ENCODE measurements at regions of chr19 and their contacts with region 1.

Region 1: DNA sequence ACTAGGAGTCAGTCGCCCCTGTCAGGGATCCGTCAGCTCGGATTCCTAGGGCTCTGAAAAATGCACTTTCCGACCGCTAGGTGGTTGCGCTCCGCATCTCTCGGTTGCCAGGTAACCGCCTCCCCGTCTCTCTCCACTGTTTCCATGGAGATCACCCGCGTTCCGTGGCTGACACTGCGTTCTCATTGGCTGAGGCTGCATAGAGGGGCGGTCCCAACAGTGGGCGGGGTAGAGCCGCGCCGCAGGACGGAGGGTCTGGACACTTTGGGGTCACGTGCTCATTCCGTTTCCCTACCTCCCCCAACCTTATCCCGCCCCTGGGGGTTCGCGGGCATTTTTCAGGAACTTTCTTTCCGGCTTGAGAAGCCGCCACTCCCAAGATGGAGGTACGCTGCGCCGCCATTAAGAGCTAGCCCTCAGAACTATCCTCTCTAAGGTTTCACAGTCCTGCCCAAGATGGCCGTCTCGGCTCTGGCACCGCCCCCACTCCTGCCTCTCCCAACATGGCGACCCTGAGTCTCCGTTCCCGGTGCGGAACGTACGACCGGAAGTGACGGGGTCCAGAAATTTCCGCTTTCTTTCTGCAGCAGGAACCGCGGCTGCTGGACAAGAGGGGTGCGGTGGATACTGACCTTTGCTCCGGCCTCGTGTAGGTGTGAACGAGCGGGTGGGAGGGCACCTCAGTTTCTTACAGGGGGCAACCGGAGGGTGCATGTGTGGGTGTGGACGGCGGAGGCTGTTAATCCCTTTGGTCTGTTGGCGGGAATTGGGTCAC is at the starts of genes ODAD3 and PRKCSH:
- DNase-seq: peak; percentile 95
- ATAC-seq: peak; percentile 88
- H3K4me3 Mint-ChIP-seq: peak within 1 kb of the TSS; percentile 100
- H3K27ac Mint-ChIP-seq: peak within 1 kb of the TSS; percentile 95
- H3K4me1 Mint-ChIP-seq: peaks cover 41% of the 10 kb centered on the region
- H3K27me3 Mint-ChIP-seq: no peaks in the 10 kb centered on the region
- CTCF ChIP-seq: peak; percentile 85
- total RNA-seq, gene ODAD3: 0.29 TPM in 1 of 2 replicates, not detected in the other
- total RNA-seq, gene PRKCSH: 287 and 289 TPM in 2 replicates

Region 2: DNA sequence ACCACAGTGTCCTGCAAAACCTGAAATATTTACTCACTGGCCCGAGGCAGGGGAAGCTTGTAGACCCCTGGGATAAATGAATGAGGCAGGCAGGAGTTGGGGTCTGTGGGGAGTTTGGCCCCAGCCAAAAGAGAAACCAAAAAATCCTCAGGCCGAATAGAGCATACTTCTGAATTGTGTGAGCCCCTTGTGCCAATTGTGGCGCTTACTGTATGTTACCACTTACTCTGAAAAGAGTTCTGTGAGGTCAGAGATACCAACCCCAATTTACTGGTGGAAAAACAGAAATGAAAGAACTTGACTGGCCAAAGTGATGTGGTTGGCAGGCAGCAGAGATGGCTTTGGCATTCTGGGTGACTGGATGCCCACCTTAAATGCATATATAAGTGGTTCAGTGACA is 557.0 kb before region 1 on chr19:
- CTCF ChIA-PET with region 1: no interaction called
- POLR2A ChIA-PET with region 1: no interaction called
- intact Hi-C with region 1: loop called (anchors 2 kb)
- DNase-seq: no peak
- ATAC-seq: peak; percentile 13
- H3K4me3 Mint-ChIP-seq: peak overlapping the region; percentile 55
- H3K27ac Mint-ChIP-seq: peak overlapping the region; percentile 84
- H3K4me1 Mint-ChIP-seq: peaks cover 39% of the 10 kb centered on the region
- H3K27me3 Mint-ChIP-seq: no peaks in the 10 kb centered on the region
- CTCF ChIP-seq: no peak

Region 3: GRCh38 chr19:11242864-11243797 is 192.1 kb before region 1 on chr19:
- CTCF ChIA-PET with region 1: no interaction called
- POLR2A ChIA-PET with region 1: no interaction called
- intact Hi-C with region 1: no loop called
- DNase-seq: peak; percentile 84
- ATAC-seq: peak; percentile 100
- H3K4me3 Mint-ChIP-seq: peak overlapping the region; percentile 15
- H3K27ac Mint-ChIP-seq: no peak overlapping the region
- H3K4me1 Mint-ChIP-seq: peaks cover 6% of the 10 kb centered on the region
- H3K27me3 Mint-ChIP-seq: peaks cover 2% of the 10 kb centered on the region
- CTCF ChIP-seq: peak; percentile 48

Region 4: DNA sequence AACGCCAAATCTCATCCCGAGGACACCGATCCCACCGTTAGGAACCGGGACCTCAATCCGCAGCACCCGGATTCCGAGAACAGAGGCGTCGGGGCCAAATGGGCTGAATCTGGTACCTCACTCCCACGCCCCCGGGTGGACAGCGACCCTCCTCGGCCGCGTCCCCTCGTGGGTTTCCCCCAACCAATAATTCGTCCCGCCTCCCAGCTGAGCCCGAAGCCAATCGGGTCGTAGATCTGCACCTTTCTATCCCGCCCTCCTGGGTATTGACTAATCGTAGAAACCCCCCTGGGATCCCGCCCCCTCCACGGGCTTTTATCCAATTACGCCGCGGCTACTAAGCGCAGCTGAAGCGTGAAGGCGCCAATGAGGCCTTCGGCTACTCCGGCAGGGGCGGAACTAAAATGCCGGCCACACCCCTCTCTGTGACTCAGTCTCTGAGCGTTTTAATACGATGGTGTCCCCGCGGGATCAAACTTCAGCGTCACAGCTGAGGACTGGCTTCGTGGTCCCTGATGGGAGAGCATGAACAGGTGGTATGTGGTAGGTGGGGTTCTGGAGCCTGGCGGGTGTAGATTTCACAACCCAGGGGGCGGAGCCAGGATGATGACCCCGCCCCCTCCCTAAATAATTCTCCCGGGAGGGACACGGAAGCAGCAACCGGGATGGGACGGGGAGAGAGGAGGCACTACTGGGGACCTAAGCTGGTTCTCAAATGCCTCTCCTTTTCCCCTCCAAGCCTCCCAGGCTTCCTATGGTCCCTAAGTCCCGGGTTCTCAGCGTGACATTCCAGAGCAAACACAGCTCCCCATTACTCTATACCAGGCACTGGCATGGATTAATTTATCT is 88.9 kb before region 1 on chr19 and contains the starts of genes CCDC159 and TMEM205:
- CTCF ChIA-PET with region 1: interaction called, 3 read pairs
- POLR2A ChIA-PET with region 1: interaction called, 3 read pairs
- intact Hi-C with region 1: loop called (anchors 1 kb)
- DNase-seq: peak; percentile 93
- ATAC-seq: peak; percentile 95
- H3K4me3 Mint-ChIP-seq: peak within 1 kb of the TSS; percentile 98
- H3K27ac Mint-ChIP-seq: peak within 1 kb of the TSS; percentile 93
- H3K4me1 Mint-ChIP-seq: peaks cover 30% of the 10 kb centered on the region
- H3K27me3 Mint-ChIP-seq: no peaks in the 10 kb centered on the region
- CTCF ChIP-seq: no peak
- total RNA-seq, gene CCDC159: 27.6 and 32.1 TPM in 2 replicates
- total RNA-seq, gene TMEM205: 61.8 and 68.1 TPM in 2 replicates

Region 5: DNA sequence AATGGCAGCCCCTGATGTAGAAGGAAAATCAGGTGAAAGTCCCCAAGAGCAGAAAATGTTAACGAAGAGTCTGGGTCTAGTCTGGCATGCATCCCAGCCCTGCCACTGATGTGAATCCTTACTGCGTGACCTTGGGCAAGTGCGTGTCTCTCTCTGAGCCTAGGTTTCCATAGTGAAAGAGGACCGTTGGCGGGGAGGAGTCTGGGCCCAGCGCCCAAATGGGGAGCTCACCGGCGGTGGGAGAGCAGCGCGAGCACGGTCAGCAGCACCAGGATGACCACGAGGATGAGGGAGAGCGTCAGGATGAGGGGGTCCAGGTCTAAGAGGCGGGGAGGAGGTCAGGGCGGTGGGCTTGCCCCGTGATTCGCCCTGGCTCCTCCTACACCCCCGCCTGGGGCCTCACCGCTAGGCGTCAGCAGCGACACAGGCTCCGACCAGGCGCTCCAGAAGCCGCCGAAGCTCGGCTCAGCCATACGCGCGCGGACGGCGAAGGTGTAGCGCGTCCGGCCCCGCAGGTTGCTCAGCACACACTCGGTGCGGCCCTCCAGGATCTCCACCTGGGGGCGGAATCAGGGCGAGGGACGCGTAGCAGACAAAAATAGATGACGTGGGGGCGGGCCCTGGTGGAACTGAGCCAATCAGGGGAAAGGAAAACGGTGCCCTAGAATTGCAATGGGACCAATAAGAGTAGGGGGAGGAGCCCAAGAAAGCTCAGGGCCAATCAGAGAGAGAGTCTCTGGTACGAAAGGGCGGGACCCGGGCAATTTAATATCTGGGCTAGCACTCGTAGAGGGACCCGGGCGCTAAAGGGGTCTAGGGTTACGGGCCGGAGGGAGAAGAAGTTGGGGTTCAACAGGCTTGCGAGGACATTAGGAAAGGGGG is 54.4 kb before region 1 on chr19:
- CTCF ChIA-PET with region 1: interaction called, 9 read pairs
- POLR2A ChIA-PET with region 1: interaction called, 35 read pairs
- intact Hi-C with region 1: loop called (anchors 1 kb)
- DNase-seq: peak; percentile 91
- ATAC-seq: peak; percentile 85
- H3K4me3 Mint-ChIP-seq: peak overlapping the region; percentile 92
- H3K27ac Mint-ChIP-seq: peak overlapping the region; percentile 100
- H3K4me1 Mint-ChIP-seq: peaks cover 48% of the 10 kb centered on the region
- H3K27me3 Mint-ChIP-seq: no peaks in the 10 kb centered on the region
- CTCF ChIP-seq: no peak

Region 6: DNA sequence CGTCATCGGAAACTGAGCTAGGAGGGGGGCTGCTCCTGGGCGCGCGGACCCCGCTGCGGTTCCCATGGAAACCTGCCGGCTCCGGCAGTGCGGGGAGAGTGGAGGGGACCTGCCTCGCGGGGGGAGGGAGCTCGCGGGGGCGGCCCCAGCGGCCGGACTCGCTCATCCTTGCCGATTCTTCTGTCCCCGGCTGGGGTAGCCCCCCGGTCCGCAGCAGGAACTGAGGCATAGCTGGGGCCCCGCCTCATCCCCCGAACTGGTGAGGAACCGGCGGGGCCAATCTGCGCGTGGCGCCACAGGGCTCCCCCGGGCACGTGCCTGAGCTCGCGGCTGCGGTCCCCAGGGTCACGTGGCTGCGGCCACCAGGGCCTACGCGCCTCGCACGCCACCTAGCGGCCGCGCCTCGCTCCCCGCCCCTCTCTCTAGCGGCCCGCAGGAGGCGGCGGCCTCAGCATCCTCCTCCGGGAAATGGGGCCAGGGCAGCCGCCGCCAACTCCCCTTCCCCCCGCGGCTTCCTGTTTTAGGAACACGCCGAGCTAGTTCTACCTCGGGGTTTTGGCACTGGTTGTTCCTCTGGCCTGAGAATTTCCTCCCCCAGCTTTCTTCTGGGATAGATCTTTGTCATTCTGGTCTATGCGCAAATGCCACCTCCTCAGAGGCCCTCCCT is 47.3 kb after region 1 on chr19:
- CTCF ChIA-PET with region 1: no interaction called
- POLR2A ChIA-PET with region 1: interaction called, 4 read pairs
- intact Hi-C with region 1: loop called (anchors 1 kb)
- DNase-seq: peak; percentile 85
- ATAC-seq: peak; percentile 72
- H3K4me3 Mint-ChIP-seq: peak overlapping the region; percentile 74
- H3K27ac Mint-ChIP-seq: peak overlapping the region; percentile 41
- H3K4me1 Mint-ChIP-seq: peaks cover 30% of the 10 kb centered on the region
- H3K27me3 Mint-ChIP-seq: peaks cover 23% of the 10 kb centered on the region
- CTCF ChIP-seq: no peak

Region 7: DNA sequence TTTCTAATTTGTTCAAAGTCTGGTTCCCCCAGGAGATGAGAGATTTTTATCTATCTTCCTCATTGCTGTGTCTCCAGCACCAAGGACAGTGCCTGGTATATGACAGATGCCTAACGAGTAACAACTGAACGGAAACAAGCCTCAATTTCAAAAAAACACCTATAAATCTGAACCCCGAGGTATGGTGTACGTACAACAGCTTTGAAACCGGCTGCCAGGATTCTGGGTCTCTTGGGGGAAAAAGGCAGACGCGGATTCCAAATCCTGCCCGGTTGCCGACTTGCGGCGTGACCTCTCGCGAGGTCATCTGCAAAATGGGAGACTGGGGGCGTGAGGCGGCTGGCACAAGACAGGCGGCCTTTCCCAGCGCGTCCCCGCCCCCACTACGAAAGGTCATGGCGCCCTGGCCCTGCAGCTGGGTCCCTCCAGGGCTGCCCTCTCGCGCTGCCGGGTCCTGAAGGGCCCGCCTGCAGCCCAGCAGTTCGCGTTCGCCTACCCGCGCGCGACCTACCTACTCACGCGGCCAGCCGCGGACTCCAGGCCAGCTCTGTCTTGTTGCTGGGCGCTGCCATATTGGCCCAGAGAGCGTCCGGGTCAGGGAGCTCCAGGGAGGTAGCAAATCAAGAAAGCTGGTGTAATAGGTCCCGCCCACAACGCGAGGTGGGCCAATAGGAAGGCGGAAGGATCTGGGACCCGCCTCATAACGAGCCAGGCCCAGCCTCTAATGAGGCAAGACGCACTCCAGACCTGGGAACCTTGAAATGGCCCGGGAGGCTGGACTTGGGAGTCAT is 93.5 kb after region 1 on chr19 and contains the start of gene ECSIT:
- CTCF ChIA-PET with region 1: no interaction called
- POLR2A ChIA-PET with region 1: no interaction called
- intact Hi-C with region 1: loop called (anchors 1 kb)
- DNase-seq: peak; percentile 81
- ATAC-seq: peak; percentile 99
- H3K4me3 Mint-ChIP-seq: peak within 1 kb of the TSS; percentile 93
- H3K27ac Mint-ChIP-seq: peak within 1 kb of the TSS; percentile 89
- H3K4me1 Mint-ChIP-seq: peaks cover 13% of the 10 kb centered on the region
- H3K27me3 Mint-ChIP-seq: no peaks in the 10 kb centered on the region
- CTCF ChIP-seq: no peak
- total RNA-seq, gene ECSIT: 49.3 and 54.2 TPM in 2 replicates

Region 8: DNA sequence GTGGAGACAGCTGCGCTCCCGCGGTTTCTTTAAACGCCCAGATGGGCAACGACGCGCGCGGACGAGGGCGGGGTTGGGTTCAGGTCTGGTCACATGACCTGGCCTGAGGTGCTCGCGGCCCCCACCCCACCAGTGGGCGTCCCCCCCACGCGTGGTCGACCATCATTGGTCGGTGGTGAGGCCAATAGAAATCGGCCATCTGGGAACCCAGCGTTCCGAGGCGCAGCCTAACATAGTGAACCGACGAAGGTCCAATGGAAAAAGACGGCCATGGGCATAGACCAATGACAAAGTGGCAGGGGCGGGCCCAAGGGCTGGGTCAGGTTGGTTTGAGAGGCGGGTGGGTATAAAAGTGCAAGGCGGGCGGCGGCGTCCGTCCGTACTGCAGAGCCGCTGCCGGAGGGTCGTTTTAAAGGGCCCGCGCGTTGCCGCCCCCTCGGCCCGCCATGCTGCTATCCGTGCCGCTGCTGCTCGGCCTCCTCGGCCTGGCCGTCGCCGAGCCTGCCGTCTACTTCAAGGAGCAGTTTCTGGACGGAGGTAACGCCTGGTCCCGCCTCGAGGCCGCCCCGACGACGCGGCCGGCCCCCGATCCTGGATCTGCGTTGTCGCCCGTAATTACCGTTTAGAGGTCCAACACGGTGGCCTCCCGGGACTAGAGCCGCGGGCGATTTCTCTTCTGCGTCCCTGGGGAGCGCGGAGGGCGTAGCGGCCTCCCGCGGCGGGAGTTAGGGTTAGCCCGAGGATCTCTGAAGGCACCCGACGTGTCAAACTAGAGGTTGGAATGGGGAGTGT is 1503.2 kb after region 1 on chr19 and contains the start of gene CALR:
- CTCF ChIA-PET with region 1: no interaction called
- POLR2A ChIA-PET with region 1: no interaction called
- intact Hi-C with region 1: no loop called
- DNase-seq: peak; percentile 96
- ATAC-seq: peak; percentile 85
- H3K4me3 Mint-ChIP-seq: peak within 1 kb of the TSS; percentile 99
- H3K27ac Mint-ChIP-seq: peak within 1 kb of the TSS; percentile 95
- H3K4me1 Mint-ChIP-seq: peaks cover 62% of the 10 kb centered on the region
- H3K27me3 Mint-ChIP-seq: no peaks in the 10 kb centered on the region
- CTCF ChIP-seq: no peak
- total RNA-seq, gene CALR: 721 and 802 TPM in 2 replicates

Measured in activated B cell treated with CpG ODN at 0.5 μM for 24 hours (primary cell).